A549 (cell line): ENCODE measurements at regions of chr7 and their contacts with region 1.

Region 1: DNA sequence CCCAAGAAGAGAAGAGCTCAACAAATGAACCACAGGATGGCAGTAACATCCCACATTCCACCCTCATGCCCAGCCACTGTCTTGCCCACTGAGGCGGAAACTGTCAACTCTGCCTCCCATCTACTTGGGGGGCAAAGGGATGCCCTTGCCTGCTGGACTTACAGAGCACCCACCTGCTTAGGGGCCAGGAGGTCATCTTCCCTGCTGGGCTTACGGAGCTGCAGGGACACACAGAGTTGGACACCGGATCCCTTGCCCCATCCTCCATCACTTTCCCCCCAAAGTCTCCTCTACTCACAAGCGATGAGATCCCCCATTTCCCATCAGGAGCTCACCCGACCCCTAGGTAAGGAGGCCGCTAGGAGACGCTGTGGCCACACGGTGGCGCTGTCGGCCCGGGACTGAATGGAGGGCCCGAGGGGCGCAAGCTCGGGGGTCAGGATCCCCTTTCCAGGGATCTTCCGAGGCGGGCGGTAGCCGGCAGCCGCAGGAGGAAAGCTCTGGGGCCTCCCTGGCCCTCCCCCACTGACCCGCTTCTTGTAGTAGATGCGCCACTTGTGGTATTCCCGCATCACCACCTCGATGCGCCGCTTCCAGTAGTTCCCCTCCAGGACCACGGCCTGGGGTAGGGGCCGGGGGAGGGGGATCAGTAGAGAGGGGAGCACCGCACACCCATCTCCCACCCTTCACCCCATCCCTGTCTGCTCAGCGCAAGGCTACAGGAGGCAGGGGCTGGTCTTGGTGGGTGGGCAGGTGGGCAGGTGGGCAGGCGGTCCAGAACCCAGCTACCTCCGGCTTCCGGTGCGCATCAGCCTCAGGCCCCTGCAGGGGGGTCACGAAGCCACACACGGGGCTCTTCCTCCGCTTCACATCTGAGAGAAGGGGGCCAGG is 17.3 kb downstream of the MLXIPL start:
- DNase-seq: peak; percentile 59 to 84
- ATAC-seq: peak; percentile 83 to 88
- H3K4me3 ChIP-seq: no peak overlapping the region
- H3K27ac ChIP-seq: peak overlapping the region; percentile 32 to 66; a peak in 5 of 6 replicates
- H3K4me1 ChIP-seq: peaks cover 18% of the 10 kb centered on the region
- CTCF ChIP-seq: peak; percentile 93
- EP300 ChIP-seq: no peak
- POLR2A ChIP-seq: no peak
- RAD21 ChIP-seq: peak; percentile 96 to 97

Region 2: DNA sequence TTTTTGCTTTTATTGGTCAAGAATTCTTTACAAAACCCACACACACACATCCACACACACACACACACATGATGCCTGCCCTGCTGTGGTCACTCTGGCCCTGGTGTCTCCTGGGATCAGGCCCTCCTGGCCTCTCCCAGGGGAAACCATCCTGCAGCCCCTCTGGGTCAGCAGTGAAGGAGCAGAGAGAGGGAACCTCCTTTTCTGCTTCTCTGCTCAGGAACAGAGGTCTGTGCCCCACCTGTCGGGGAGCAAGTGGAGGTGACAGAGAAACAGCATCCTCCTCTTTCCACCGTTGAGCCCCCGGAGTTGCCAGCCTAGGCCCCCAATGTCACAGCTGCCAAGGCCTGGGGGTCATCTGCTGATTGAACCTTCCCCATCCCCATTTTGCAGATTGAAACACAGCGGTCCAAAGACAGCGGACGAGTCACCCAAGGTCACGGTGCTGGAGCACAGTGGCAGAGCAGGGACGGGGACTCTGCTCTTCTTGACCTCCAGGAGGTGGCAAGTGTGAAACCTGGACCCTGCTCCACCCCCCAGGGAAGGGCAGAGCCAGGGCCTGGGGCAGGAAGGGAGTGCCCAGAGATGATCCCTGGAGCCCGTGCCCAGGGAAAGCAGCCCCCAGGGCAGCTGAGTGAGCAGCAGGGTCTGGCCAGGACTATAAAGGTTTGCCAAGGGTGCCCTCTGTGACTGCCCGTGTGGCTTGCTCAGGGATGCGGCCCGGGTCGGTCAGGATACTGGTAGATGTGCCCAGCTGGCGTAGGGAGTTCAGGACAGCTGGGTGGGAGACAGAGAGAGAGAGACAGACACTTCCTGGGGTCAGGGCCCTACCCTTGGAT is 13.6 kb before region 1 on chr7:
- CTCF ChIA-PET with region 1: interaction called, 79 read pairs
- POLR2A ChIA-PET with region 1: interaction called, 3 read pairs
- DNase-seq: no peak
- ATAC-seq: peak in 1 of 2 experiments; percentile 24; a peak in 2 of 6 replicates
- H3K4me3 ChIP-seq: no peak overlapping the region
- H3K27ac ChIP-seq: no peak overlapping the region
- H3K4me1 ChIP-seq: no peaks in the 10 kb centered on the region
- CTCF ChIP-seq: no peak
- EP300 ChIP-seq: no peak
- POLR2A ChIP-seq: no peak
- RAD21 ChIP-seq: no peak

Region 3: DNA sequence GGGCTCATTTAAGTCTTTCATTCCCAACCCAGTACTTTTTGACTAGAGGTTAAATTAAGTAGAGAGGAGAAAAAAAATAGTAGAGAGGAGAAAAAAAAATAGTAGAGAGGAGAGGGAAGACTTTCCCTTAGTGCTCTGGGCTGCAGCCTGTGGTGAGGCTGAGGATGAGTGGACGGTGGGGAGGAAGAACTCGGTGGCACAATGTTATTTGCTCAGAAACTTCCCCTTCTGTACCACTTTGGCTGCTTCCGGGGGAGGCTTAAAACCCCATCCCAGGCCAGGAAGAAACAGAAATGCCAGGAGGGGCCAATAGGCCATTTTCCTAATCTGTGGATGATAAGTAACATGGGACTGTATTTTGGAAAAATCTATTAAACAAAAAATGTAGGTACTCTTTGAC is 31.9 kb after region 1 on chr7:
- CTCF ChIA-PET with region 1: interaction called, 22 read pairs
- POLR2A ChIA-PET with region 1: no interaction called
- DNase-seq: no peak
- ATAC-seq: no peak
- H3K4me3 ChIP-seq: no peak overlapping the region
- H3K27ac ChIP-seq: no peak overlapping the region
- H3K4me1 ChIP-seq: peaks cover 21% of the 10 kb centered on the region
- CTCF ChIP-seq: no peak
- EP300 ChIP-seq: no peak
- POLR2A ChIP-seq: no peak
- RAD21 ChIP-seq: no peak

Region 4: GRCh38 chr7:73667344-73668102 is 60.5 kb after region 1 on chr7 and contains the start of gene VPS37D:
- CTCF ChIA-PET with region 1: interaction called, 58 read pairs
- POLR2A ChIA-PET with region 1: interaction called, 5 read pairs
- DNase-seq: peak; percentile 85 to 89
- ATAC-seq: peak; percentile 82 to 91
- H3K4me3 ChIP-seq: peak within 1 kb of the TSS; percentile 90
- H3K27ac ChIP-seq: peak within 1 kb of the TSS; percentile 95
- H3K4me1 ChIP-seq: peaks cover 18% of the 10 kb centered on the region; the same call in 2 of the 3 replicates
- CTCF ChIP-seq: peak; percentile 97
- EP300 ChIP-seq: no peak
- POLR2A ChIP-seq: no peak
- RAD21 ChIP-seq: peak; percentile 71 to 94
- polyA plus RNA-seq, gene VPS37D: 3.3 and 3.8 TPM in 2 replicates

Region 5: GRCh38 chr7:73690646-73691045 is 83.6 kb after region 1 on chr7:
- CTCF ChIA-PET with region 1: interaction called, 71 read pairs
- POLR2A ChIA-PET with region 1: no interaction called
- DNase-seq: no peak
- ATAC-seq: no peak
- H3K4me3 ChIP-seq: no peak overlapping the region
- H3K27ac ChIP-seq: no peak overlapping the region
- H3K4me1 ChIP-seq: no peaks in the 10 kb centered on the region
- CTCF ChIP-seq: no peak
- EP300 ChIP-seq: no peak
- POLR2A ChIP-seq: no peak
- RAD21 ChIP-seq: no peak

Region 6: GRCh38 chr7:73707142-73707595 is 100.1 kb after region 1 on chr7:
- CTCF ChIA-PET with region 1: interaction called, 71 read pairs
- POLR2A ChIA-PET with region 1: interaction called, 3 read pairs
- DNase-seq: peak; percentile 87 to 98
- ATAC-seq: peak; percentile 19 to 48
- H3K4me3 ChIP-seq: peak overlapping the region; percentile 30; the same call in 2 of the 3 replicates
- H3K27ac ChIP-seq: peak overlapping the region; percentile 99 to 100
- H3K4me1 ChIP-seq: peaks cover 93% of the 10 kb centered on the region
- CTCF ChIP-seq: no peak
- EP300 ChIP-seq: peak; percentile 88 to 91; a peak in 4 of 5 replicates
- POLR2A ChIP-seq: no peak
- RAD21 ChIP-seq: no peak; a peak in 2 of 5 replicates

Region 7: DNA sequence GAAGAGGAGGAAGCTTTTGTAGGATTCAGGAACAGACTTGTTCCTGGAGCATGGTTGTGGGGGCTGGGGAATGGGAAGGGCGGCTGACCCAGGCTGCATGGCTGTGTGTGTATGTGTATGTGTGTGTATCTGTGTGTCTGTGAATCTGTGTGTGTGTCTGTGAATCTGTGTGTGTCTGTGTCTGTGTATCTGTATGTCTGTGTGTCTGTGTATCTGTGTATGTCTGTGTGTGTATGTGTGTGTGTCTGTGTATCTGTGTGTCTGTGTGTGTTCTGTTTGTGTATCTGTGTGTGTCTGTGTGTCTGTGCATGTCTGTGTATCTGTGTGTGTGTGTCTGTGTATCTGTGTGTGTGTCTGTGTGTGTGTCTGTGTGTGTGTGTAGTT is 119.0 kb after region 1 on chr7:
- CTCF ChIA-PET with region 1: interaction called, 290 read pairs
- POLR2A ChIA-PET with region 1: interaction called, 4 read pairs
- DNase-seq: no peak
- ATAC-seq: peak; percentile 56 to 61
- H3K4me3 ChIP-seq: no peak overlapping the region
- H3K27ac ChIP-seq: peak overlapping the region; percentile 27 to 74; a peak in 4 of 6 replicates
- H3K4me1 ChIP-seq: peaks cover 20% of the 10 kb centered on the region
- CTCF ChIP-seq: no peak
- EP300 ChIP-seq: no peak
- POLR2A ChIP-seq: no peak
- RAD21 ChIP-seq: no peak